T-cell (primary cell): ENCODE measurements at regions of chr7 and their contacts with region 1.

Region 1: GRCh38 chr7:106736508-106737201 is 75.7 kb upstream of the CCDC71L start:
- DNase-seq: peak in 24 of 35 experiments; percentile 2 to 75 (median 16)
- ATAC-seq: peak; percentile 84 to 95 (median 93)
- H3K4me3 ChIP-seq: no peak overlapping the region
- H3K4me3 Mint-ChIP-seq: no peak overlapping the region
- H3K27ac ChIP-seq: no peak overlapping the region
- H3K27ac Mint-ChIP-seq: peak overlapping the region; percentile 10 to 68
- H3K4me1 ChIP-seq: peaks cover 0 to 10% of the 10 kb centered on the region in 2 experiments
- H3K4me1 Mint-ChIP-seq: peaks cover 15 to 17% (median 17%) of the 10 kb centered on the region in 3 donors
- H3K27me3 ChIP-seq: no peaks in the 10 kb centered on the region
- H3K27me3 Mint-ChIP-seq: no peaks in the 10 kb centered on the region

Region 2: GRCh38 chr7:106176414-106177299 is 560.0 kb before region 1 on chr7:
- CTCF ChIA-PET with region 1: interaction called, 4 to 14 read pairs
- POLR2A ChIA-PET with region 1: interaction called in 1 of 2 experiments, 3 read pairs
- DNase-seq: peak in 34 of 35 experiments; percentile 12 to 78 (median 54)
- ATAC-seq: peak; percentile 75 to 80 (median 79)
- H3K4me3 ChIP-seq: no peak overlapping the region
- H3K4me3 Mint-ChIP-seq: no peak overlapping the region
- H3K27ac ChIP-seq: no peak overlapping the region
- H3K27ac Mint-ChIP-seq: no peak overlapping the region
- H3K4me1 ChIP-seq: no peaks in the 10 kb centered on the region
- H3K4me1 Mint-ChIP-seq: peaks cover 0 to 4% (median 2%) of the 10 kb centered on the region in 3 donors
- H3K27me3 ChIP-seq: peaks cover 4 to 9% of the 10 kb centered on the region in 2 experiments
- H3K27me3 Mint-ChIP-seq: peaks cover 13% of the 10 kb centered on the region in 2 donors

Region 3: DNA sequence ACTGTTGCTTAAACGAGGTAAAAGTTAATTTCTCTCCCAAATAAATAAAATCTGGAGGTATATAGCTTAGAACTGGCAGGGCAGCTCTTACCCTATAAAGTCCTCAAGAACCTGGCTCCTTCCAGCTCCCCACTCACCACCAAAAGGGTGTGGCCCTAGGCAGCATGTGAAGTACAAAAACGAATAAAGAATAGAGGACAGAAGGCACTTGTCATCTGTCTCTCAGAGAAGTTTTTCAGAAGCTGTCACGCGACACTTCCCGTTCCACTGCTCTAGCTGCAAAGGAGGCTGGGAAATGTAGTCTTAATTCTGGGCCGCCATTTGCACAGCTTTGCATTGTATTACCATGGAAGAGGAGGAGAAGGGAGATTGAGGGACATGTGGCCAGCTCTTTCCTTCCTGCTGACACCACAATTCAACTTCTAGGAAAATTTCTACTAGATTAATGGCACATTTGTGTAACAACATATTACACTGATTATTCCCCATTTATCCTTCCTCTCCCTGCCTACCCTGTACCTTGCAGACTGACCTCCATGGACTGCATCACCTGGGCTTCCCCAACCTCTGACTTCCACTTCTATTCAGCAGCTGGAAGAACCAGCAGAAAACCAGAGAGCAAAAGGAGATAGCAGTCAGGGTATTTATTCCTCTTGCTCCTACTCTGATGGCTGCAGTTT is 137.9 kb before region 1 on chr7:
- CTCF ChIA-PET with region 1: interaction called, 4 to 12 read pairs
- POLR2A ChIA-PET with region 1: no interaction called
- DNase-seq: peak; percentile 28 to 83 (median 59)
- ATAC-seq: peak; percentile 97 to 99 (median 98)
- H3K4me3 ChIP-seq: no peak overlapping the region
- H3K4me3 Mint-ChIP-seq: peak overlapping the region; percentile 6 to 56 (median 40)
- H3K27ac ChIP-seq: no peak overlapping the region
- H3K27ac Mint-ChIP-seq: peak overlapping the region in 1 of 2 donors; percentile 49
- H3K4me1 ChIP-seq: peaks cover 0 to 7% of the 10 kb centered on the region in 2 experiments
- H3K4me1 Mint-ChIP-seq: peaks cover 0 to 10% (median 6%) of the 10 kb centered on the region in 3 donors
- H3K27me3 ChIP-seq: no peaks in the 10 kb centered on the region
- H3K27me3 Mint-ChIP-seq: no peaks in the 10 kb centered on the region

Region 4: DNA sequence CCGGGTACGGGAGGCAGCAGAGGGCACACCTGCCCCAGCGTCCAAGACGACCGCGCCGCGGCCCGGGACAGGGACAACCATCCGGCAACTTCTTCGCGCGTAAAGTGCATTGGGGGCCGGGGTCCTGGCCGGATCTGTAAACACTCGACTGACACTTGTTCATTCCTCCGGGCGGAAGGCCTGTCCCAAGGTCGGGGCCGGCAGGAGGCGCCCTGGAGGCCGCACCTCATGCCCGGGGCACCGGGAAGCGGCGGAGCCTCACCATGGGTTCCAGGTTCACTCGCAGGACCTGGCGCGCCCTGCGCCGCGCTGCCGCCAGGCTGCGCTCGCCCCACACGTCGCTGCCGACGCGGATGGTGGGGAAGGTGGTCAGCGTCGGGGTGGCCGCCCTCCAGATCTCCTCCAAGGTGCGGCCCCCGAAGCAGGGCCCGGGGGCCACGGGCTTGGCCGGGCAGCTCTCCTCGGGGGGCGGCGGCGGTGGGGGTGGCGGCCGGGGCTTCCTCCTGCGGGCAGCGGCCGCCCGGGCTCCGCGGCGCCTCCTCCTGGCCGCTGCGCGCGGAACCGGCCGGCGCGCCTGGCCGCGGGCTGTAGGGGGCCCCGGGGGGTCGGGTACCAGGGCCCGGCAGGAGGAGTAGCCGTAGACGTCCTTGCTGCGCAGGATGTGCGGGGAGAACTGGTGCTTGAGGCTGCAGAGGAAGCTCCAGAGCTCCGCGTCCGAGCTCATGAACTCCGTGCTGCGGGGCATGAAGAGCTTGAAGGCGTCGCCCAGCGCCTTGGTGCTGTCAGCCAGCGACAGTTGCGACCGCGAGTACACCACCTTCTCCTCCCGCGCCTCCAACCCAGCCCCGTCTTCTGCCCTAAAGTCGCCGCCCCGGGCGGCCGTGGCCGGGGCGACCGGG is 76.4 kb before region 1 on chr7:
- CTCF ChIA-PET with region 1: interaction called, 9 to 23 read pairs
- POLR2A ChIA-PET with region 1: interaction called in 1 of 2 experiments, 3 read pairs
- DNase-seq: peak; percentile 49 to 83 (median 64)
- ATAC-seq: peak; percentile 60 to 67 (median 62)
- H3K4me3 ChIP-seq: peak overlapping the region; percentile 60 to 87
- H3K4me3 Mint-ChIP-seq: peak overlapping the region; percentile 85 to 89 (median 88)
- H3K27ac ChIP-seq: peak overlapping the region; percentile 82
- H3K27ac Mint-ChIP-seq: peak overlapping the region; percentile 75 to 88
- H3K4me1 ChIP-seq: peaks cover 6 to 17% of the 10 kb centered on the region in 2 experiments
- H3K4me1 Mint-ChIP-seq: peaks cover 21 to 39% (median 30%) of the 10 kb centered on the region in 3 donors
- H3K27me3 ChIP-seq: no peaks in the 10 kb centered on the region
- H3K27me3 Mint-ChIP-seq: no peaks in the 10 kb centered on the region